ENCODE measurements at regions of chr6 and their contacts with region 1.

Region 1: GRCh38 chr6:23016696-23017095 is 447.3 kb downstream of the HDGFL1 start:
- DNase-seq: no peak
- ATAC-seq: no peak
- H3K4me3 ChIP-seq: no peak overlapping the region
- H3K27ac ChIP-seq: no peak overlapping the region
- H3K4me1 ChIP-seq: no peaks in the 10 kb centered on the region
- H3K27me3 ChIP-seq: no peaks in the 10 kb centered on the region
- CTCF ChIP-seq: no peak

Region 2: DNA sequence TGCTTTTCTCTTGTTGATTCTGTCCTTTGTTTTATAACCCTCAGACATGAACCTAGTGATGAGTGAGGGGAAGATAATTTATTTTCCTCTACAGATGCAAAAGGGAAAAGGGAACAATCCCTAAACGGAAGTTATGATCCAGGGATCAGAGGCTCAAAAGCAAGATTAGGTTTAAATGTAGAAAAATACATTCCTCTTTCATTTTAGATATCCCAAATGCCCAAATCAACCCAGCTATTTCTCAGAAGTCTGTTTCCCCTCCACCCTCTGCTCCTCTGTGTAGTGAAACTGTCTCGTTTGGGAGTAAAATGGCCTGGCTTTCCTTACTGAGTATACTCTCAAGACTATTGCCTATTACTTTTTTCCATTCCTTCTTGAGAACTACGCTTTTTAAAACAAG is 816.9 kb before region 1 on chr6:
- intact Hi-C with region 1: loop called in 1 of 2 experiments (anchors 5 kb)
- DNase-seq: no peak
- ATAC-seq: no peak
- H3K4me3 ChIP-seq: no peak overlapping the region
- H3K27ac ChIP-seq: no peak overlapping the region
- H3K4me1 ChIP-seq: no peaks in the 10 kb centered on the region
- H3K27me3 ChIP-seq: no peaks in the 10 kb centered on the region
- CTCF ChIP-seq: no peak

Region 3: GRCh38 chr6:23045280-23045679 is 28.6 kb after region 1 on chr6:
- intact Hi-C with region 1: no loop called
- DNase-seq: no peak
- ATAC-seq: no peak
- H3K4me3 ChIP-seq: no peak overlapping the region
- H3K27ac ChIP-seq: no peak overlapping the region
- H3K4me1 ChIP-seq: no peaks in the 10 kb centered on the region
- H3K27me3 ChIP-seq: no peaks in the 10 kb centered on the region
- CTCF ChIP-seq: no peak

Region 4: GRCh38 chr6:23055523-23055922 is 38.8 kb after region 1 on chr6:
- intact Hi-C with region 1: no loop called
- DNase-seq: no peak
- ATAC-seq: no peak
- H3K4me3 ChIP-seq: no peak overlapping the region
- H3K27ac ChIP-seq: no peak overlapping the region
- H3K4me1 ChIP-seq: no peaks in the 10 kb centered on the region
- H3K27me3 ChIP-seq: no peaks in the 10 kb centered on the region
- CTCF ChIP-seq: no peak